ENCODE measurements at regions of chr15 and their contacts with region 1.

Region 1: DNA sequence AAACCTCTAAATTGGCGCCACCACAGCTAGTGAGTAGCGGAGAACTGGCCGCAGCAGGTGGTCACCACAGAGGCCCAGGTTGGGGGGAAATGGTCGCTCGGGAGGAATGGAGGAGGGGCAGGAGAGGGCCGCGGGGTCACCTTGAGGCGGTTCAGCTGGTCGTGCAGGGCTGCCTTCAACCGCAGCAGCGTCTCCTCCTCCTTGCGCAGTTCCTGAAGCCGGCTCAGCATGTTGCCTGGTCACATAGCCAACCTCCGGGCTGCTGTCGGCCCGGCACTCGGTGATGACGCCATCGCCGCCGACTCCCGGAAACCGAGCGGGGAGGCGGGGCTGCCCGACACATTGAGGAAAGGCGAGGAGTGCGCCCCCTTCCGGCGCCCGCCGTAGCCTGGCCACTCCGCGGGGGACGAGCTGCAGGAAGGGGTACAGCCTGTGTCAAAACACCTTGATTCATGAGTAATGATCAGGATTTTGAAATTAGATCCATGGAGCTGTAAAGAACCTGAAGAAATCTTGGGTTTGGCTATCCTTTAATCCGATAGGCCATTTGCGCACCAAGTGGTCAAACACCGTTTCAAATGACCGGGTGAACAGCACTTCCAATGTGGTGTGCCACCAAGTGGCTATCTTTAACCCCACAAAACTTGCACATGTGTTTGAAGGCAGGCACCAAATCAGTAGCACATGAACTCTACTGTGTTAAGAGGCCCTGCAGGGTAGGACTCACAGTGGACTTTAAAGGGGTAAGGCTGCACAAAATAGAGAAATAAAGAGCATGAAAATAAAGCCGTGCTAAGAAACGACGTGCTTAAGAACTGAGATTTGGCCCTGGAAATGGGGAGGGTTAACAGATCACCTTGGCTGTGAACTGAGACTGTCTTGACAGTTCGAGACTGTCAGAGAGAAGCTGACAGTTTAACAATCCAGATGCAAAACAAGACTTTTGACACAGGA is at the start of gene SNAPC5:
- DNase-seq: peak; percentile 96
- H3K4me3 ChIP-seq: peak within 1 kb of the TSS; percentile 41 to 62 (median 62)
- H3K27ac ChIP-seq: peak within 1 kb of the TSS; percentile 41
- H3K4me1 ChIP-seq: peaks cover 20% of the 10 kb centered on the region
- H3K27me3 ChIP-seq: no peaks in the 10 kb centered on the region
- CTCF ChIP-seq: peak; percentile 97 to 99
- POLR2A ChIP-seq: peak; percentile 78
- total RNA-seq, gene SNAPC5: 13.6 and 17.4 TPM in 2 replicates

Region 2: DNA sequence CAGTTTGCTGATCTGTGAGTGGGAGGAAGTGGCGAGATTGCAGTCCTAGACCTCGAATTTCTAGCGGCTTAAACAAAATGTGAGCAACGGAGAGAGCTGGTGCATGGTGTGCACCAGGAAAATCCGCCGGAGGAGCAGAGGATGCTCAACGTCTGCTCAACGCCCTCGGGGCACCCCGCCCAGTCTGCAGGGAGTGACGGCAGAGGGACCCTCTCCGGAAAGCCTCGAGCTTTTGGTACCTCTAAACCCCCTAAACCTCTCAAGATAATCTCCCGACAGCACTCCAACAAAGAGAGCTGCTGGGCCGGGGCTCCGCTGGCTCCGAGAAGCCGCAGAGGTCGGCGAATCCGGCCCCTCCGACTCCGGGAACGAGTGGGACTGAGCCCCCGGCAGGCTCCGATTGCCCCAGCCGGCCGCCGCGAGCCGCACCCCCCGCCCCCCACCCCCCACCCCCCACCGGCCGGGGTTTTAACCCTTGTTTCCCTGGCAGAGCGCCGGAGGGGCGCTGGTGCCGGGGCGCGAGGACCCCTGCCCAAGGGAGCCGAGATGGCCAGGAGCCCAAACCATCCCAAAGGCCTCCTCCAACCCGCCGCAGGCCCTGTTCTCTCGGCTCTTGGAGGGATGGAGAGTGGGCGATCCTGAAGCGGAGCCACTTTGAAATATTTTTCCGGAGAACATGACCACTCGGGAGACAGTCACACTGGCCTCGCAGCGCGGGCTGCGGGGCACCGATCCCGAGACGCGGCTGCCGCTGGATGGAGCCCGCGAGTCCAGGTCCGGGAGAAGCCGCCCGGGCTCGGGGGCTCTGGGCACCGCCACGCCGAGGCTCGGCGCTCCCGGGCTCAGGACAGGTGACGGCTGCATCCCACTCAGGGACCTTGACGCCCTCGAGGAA is 245.7 kb before region 1 on chr15:
- CTCF ChIA-PET with region 1: interaction called, 20 read pairs
- POLR2A ChIA-PET with region 1: no interaction called
- dilution Hi-C with region 1: no loop called
- intact Hi-C with region 1: loop called (anchors 1 kb)
- DNase-seq: peak; percentile 40
- H3K4me3 ChIP-seq: peak overlapping the region; percentile 15 to 42 (median 35)
- H3K27ac ChIP-seq: no peak overlapping the region
- H3K4me1 ChIP-seq: peaks cover 18% of the 10 kb centered on the region
- H3K27me3 ChIP-seq: peaks cover 68 to 76% of the 10 kb centered on the region in 2 experiments
- CTCF ChIP-seq: peak; percentile 67 to 87
- POLR2A ChIP-seq: no peak

Region 3: DNA sequence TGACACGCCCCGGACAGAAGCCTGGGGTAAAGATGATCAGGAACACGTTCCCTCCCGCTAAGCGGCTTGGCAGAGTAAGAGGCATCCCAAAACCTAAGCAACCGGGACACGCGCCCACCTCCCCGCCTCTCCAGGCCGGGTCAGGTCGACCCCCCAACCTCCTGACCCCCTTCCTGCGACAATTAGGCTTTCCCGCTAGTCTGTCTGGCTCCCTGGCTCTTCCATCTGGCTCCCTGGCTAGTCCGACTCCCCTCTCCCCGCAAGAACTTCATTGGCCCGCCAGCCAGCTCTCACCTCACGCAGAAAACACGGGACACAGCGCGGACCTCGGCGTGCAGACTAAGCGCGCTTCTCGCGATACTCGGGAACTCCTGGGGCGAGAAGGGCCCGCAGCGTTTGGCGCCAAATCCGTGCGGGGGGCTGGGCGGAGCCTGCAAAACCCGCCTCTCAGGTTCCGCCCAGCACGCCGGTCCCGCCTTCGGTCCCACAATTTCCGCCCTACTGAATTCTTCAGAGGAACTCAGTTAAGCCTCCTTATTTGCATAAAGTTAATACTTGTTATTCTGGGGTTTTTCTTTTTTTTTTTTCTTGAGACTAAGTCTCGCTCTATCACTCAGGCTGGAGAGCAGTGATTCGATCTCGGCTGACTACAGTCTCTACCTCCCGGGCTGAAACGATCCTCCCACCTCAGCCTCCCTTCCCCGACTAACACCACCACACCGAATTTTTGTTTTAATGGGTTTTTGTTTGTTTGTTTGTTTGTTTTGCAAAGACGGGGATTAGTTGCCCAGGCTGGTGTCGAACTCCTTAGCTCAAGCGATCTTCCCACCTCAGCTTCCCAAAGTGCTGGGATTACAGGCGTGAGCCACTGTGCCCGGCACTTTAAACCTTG is 141.2 kb before region 1 on chr15 and contains the start of gene TIPIN:
- CTCF ChIA-PET with region 1: interaction called, 33 read pairs
- POLR2A ChIA-PET with region 1: no interaction called
- dilution Hi-C with region 1: no loop called
- intact Hi-C with region 1: loop called (anchors 1 kb)
- DNase-seq: peak; percentile 97
- H3K4me3 ChIP-seq: peak within 1 kb of the TSS; percentile 33 to 82 (median 65)
- H3K27ac ChIP-seq: peak within 1 kb of the TSS; percentile 58
- H3K4me1 ChIP-seq: peaks cover 6% of the 10 kb centered on the region
- H3K27me3 ChIP-seq: no peaks in the 10 kb centered on the region
- CTCF ChIP-seq: no peak
- POLR2A ChIP-seq: peak; percentile 81
- total RNA-seq, gene TIPIN: 15.4 and 16.2 TPM in 2 replicates

Region 4: GRCh38 chr15:66401130-66402021 is 96.4 kb before region 1 on chr15:
- CTCF ChIA-PET with region 1: interaction called, 35 read pairs
- POLR2A ChIA-PET with region 1: no interaction called
- dilution Hi-C with region 1: no loop called
- intact Hi-C with region 1: no loop called
- DNase-seq: no peak
- H3K4me3 ChIP-seq: no peak overlapping the region
- H3K27ac ChIP-seq: no peak overlapping the region
- H3K4me1 ChIP-seq: peaks cover 31% of the 10 kb centered on the region
- H3K27me3 ChIP-seq: no peaks in the 10 kb centered on the region
- CTCF ChIP-seq: no peak
- POLR2A ChIP-seq: no peak

Region 5: DNA sequence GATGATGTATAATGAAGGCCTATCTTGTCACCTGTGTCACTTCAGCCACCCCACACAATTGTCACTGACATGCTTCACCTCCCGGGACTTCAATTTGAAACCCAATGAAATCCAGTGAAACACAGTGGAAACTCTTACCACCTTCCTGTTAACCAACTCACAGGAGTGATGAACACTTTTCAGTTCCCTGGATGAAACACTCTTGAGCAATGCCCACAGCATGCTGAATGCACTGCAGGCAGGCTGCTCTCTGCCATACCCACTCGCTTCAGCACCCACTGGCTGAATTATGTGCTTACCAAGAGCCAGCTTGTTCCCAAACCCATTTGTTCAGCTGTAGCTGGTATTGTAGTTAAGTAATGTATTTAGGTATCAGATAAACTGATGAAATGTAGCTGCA is 64.1 kb before region 1 on chr15:
- CTCF ChIA-PET with region 1: no interaction called
- POLR2A ChIA-PET with region 1: no interaction called
- dilution Hi-C with region 1: no loop called
- intact Hi-C with region 1: no loop called
- DNase-seq: no peak
- H3K4me3 ChIP-seq: no peak overlapping the region
- H3K27ac ChIP-seq: no peak overlapping the region
- H3K4me1 ChIP-seq: no peaks in the 10 kb centered on the region
- H3K27me3 ChIP-seq: no peaks in the 10 kb centered on the region
- CTCF ChIP-seq: no peak
- POLR2A ChIP-seq: no peak

Region 6: DNA sequence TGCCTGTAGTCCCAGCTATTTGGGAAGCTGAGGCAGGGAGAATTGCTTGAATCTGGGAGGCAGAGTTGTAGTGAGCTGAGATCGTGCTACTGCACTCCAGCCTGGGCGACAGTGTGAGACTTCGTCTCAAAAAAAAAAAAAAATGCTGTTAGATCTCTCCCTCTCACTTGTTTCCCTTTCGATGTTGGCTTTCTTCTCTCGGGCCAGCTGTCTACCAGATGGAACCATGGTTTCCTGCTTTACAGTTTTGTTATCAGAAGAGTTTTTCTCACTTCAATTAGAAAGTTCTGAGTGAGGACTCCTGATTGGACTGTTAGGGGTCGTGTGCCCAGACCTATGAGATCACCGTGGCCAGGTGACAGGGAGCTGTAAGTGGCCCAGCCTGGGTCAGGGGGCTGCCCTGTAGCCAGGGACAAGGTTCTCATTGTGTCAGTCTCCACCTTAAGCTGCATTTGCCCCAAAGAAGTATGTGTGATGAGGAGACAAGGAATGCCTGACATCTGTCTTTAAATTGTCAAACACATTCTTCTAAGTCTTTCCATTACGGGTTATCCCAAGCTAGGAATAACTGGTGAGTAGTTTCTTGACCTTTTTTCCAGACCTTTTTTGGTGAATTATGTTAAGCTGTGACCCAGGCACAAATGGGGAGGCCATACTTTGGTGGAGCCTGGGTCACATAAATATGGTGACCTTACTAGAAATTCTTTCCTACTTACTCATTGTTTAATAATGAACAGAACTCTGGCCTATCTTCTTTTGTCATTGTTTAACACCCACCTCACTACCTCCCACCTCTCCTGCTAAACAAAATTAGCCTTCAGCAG is 25.4 kb before region 1 on chr15:
- CTCF ChIA-PET with region 1: interaction called, 10 read pairs
- POLR2A ChIA-PET with region 1: no interaction called
- dilution Hi-C with region 1: no loop called
- intact Hi-C with region 1: no loop called
- DNase-seq: peak; percentile 41
- H3K4me3 ChIP-seq: no peak overlapping the region
- H3K27ac ChIP-seq: no peak overlapping the region
- H3K4me1 ChIP-seq: peaks cover 11% of the 10 kb centered on the region
- H3K27me3 ChIP-seq: no peaks in the 10 kb centered on the region
- CTCF ChIP-seq: no peak
- POLR2A ChIP-seq: no peak

Region 7: GRCh38 chr15:67468416-67468815 is 970.6 kb after region 1 on chr15:
- CTCF ChIA-PET with region 1: no interaction called
- POLR2A ChIA-PET with region 1: no interaction called
- dilution Hi-C with region 1: no loop called
- intact Hi-C with region 1: no loop called
- DNase-seq: no peak
- H3K4me3 ChIP-seq: no peak overlapping the region
- H3K27ac ChIP-seq: no peak overlapping the region
- H3K4me1 ChIP-seq: no peaks in the 10 kb centered on the region
- H3K27me3 ChIP-seq: no peaks in the 10 kb centered on the region
- CTCF ChIP-seq: no peak
- POLR2A ChIP-seq: no peak

Measured in endothelial cell of umbilical vein (primary cell).